Activated B cell treated with CpG ODN at 0.5 μM for 24 hours (primary cell): ENCODE measurements at regions of chr9 and their contacts with region 1.

Region 1: DNA sequence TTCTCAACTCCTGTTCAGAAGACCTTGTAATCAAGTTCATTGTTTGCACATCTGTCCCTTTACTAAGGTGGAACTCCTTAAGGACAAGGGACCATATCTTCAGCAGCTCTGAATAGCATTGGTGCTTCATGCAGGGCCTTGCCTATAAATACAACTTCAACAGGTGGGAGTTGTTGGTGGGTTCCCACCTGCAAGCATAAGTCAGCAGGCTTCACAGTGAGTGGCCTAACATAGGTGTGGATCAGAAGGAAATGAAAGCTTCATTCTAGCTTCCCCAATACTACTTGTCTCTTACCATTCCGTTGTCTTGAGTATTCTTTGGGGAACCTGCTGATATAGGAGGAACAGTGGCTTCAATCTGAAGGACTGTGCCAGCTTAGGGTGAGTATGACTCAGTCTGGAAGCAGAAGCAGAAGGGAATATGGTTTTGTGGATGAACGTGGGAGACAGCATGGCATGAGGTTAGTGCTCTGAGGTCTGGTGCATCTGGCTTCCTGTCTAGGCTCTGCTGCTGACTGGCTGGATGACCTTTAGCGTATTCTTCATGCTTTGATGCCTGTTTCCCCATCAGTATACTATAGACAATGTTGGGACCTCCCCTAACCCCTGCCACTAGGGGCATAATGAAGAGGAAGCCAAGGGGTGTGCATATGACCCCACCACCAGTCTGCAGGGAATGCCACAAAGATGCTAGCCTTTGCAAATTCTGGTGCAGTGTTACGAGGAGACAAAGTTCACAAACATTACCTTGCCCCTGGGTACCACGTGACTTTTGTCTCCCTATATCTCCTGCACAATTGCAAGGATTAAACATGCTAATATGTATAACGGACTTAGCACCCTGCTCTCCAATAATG is 192.3 kb downstream of the PALM2AKAP2 start:
- DNase-seq: peak; percentile 43
- ATAC-seq: peak; percentile 65
- H3K4me3 Mint-ChIP-seq: peak overlapping the region; percentile 68
- H3K27ac Mint-ChIP-seq: peak overlapping the region; percentile 98
- H3K4me1 Mint-ChIP-seq: peaks cover 100% of the 10 kb centered on the region
- H3K27me3 Mint-ChIP-seq: no peaks in the 10 kb centered on the region
- CTCF ChIP-seq: no peak

Region 2: GRCh38 chr9:109903515-109904138 is 68.6 kb before region 1 on chr9:
- CTCF ChIA-PET with region 1: interaction called, 114 read pairs
- POLR2A ChIA-PET with region 1: interaction called, 704 read pairs
- intact Hi-C with region 1: loop called (anchors 1 kb)
- DNase-seq: no peak
- ATAC-seq: peak; percentile 65
- H3K4me3 Mint-ChIP-seq: no peak overlapping the region
- H3K27ac Mint-ChIP-seq: peak overlapping the region; percentile 69
- H3K4me1 Mint-ChIP-seq: peaks cover 21% of the 10 kb centered on the region
- H3K27me3 Mint-ChIP-seq: no peaks in the 10 kb centered on the region
- CTCF ChIP-seq: peak; percentile 25

Region 3: DNA sequence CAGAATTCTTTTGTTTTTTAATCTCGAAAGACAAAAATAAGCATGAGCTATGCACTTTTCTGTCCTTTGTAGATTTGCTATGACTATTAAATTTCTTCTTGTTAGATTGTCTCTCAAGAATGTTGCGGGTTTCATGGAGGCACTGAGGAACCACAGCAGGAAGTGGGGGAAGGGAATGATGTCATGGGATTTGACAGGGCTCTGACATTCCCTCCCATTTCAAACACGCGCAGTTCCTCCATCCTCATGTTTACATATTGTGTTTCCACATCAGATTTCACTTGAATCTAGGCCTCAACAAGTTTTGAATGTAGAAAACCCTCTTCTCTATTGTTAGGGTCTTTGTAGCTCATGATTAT is 37.4 kb before region 1 on chr9:
- CTCF ChIA-PET with region 1: no interaction called
- POLR2A ChIA-PET with region 1: interaction called, 29 read pairs
- intact Hi-C with region 1: no loop called
- DNase-seq: no peak
- ATAC-seq: no peak
- H3K4me3 Mint-ChIP-seq: no peak overlapping the region
- H3K27ac Mint-ChIP-seq: peak overlapping the region; percentile 48
- H3K4me1 Mint-ChIP-seq: peaks cover 39% of the 10 kb centered on the region
- H3K27me3 Mint-ChIP-seq: no peaks in the 10 kb centered on the region
- CTCF ChIP-seq: no peak

Region 4: DNA sequence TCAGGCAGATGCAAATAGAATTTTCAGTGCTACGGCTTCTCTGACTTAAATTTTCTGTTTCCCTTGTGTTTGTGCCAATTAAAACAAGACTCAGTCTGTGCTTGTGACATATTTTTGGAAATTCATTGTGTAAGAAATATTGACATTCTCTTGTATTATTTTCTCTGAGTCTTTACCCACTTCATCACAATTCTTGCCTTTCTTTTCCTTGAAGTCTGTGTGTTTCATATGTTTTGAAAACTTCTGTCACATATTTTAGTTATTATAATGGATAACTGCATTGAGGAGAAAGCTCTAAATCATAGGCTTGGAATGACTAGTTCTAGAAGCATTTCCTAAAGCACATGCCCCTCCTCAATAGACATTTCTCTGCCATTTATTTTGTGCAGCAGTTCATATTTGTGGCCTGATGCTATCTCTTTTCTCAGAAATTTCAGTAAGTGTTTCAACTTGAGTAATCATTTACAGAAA is 14.3 kb after region 1 on chr9:
- CTCF ChIA-PET with region 1: interaction called, 3 read pairs
- POLR2A ChIA-PET with region 1: interaction called, 10 read pairs
- intact Hi-C with region 1: no loop called
- DNase-seq: no peak
- ATAC-seq: no peak
- H3K4me3 Mint-ChIP-seq: no peak overlapping the region
- H3K27ac Mint-ChIP-seq: no peak overlapping the region
- H3K4me1 Mint-ChIP-seq: peaks cover 3% of the 10 kb centered on the region
- H3K27me3 Mint-ChIP-seq: no peaks in the 10 kb centered on the region
- CTCF ChIP-seq: no peak

Region 5: GRCh38 chr9:110058304-110058953 is 86.2 kb after region 1 on chr9:
- CTCF ChIA-PET with region 1: interaction called, 14 read pairs
- POLR2A ChIA-PET with region 1: interaction called, 412 read pairs
- intact Hi-C with region 1: no loop called
- DNase-seq: no peak
- ATAC-seq: peak; percentile 75
- H3K4me3 Mint-ChIP-seq: peak overlapping the region; percentile 33
- H3K27ac Mint-ChIP-seq: peak overlapping the region; percentile 83
- H3K4me1 Mint-ChIP-seq: peaks cover 73% of the 10 kb centered on the region
- H3K27me3 Mint-ChIP-seq: no peaks in the 10 kb centered on the region
- CTCF ChIP-seq: no peak

Region 6: DNA sequence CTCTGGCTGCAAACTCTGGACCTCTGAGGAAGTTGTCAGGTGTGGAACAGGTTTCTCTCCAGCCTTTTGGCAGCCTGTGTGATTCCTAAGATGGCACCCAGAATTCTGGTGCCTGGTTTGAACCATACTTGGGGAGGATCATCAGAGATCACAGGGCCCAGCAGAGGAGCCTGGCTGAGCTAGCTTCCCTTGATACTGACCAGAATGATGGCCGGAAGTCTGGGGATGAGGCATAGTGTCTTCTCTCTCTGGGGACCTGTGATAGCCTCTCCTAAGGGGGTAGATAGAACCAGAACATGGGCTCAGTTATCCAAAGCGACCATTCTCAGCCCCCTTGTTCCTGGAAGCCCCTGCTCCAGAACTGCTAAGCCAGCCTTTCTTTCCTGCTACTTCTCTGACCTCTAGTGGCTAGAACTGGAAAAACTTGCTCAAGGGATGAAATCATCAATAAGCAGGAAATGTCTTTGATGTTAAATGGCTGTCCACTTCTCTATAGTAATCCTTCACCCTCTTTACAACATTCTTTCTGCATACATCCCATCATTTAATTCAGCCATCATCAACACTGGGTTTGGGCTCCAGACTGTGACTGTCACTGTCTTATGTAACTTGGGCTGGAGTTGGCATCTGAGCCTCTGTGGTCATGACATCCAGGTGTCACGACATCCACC is 180.6 kb after region 1 on chr9:
- CTCF ChIA-PET with region 1: interaction called, 6 read pairs
- POLR2A ChIA-PET with region 1: interaction called, 15 read pairs
- intact Hi-C with region 1: loop called (anchors 1 kb)
- DNase-seq: no peak
- ATAC-seq: peak; percentile 32
- H3K4me3 Mint-ChIP-seq: peak overlapping the region; percentile 39
- H3K27ac Mint-ChIP-seq: peak overlapping the region; percentile 81
- H3K4me1 Mint-ChIP-seq: peaks cover 100% of the 10 kb centered on the region
- H3K27me3 Mint-ChIP-seq: no peaks in the 10 kb centered on the region
- CTCF ChIP-seq: no peak

Region 7: GRCh38 chr9:110427497-110428104 is 455.3 kb after region 1 on chr9:
- CTCF ChIA-PET with region 1: no interaction called
- POLR2A ChIA-PET with region 1: no interaction called
- intact Hi-C with region 1: no loop called
- DNase-seq: no peak
- ATAC-seq: no peak
- H3K4me3 Mint-ChIP-seq: no peak overlapping the region
- H3K27ac Mint-ChIP-seq: no peak overlapping the region
- H3K4me1 Mint-ChIP-seq: no peaks in the 10 kb centered on the region
- H3K27me3 Mint-ChIP-seq: peaks cover 2% of the 10 kb centered on the region
- CTCF ChIP-seq: no peak